ENCODE measurements at regions of chr1 and their contacts with region 1.

Region 1: DNA sequence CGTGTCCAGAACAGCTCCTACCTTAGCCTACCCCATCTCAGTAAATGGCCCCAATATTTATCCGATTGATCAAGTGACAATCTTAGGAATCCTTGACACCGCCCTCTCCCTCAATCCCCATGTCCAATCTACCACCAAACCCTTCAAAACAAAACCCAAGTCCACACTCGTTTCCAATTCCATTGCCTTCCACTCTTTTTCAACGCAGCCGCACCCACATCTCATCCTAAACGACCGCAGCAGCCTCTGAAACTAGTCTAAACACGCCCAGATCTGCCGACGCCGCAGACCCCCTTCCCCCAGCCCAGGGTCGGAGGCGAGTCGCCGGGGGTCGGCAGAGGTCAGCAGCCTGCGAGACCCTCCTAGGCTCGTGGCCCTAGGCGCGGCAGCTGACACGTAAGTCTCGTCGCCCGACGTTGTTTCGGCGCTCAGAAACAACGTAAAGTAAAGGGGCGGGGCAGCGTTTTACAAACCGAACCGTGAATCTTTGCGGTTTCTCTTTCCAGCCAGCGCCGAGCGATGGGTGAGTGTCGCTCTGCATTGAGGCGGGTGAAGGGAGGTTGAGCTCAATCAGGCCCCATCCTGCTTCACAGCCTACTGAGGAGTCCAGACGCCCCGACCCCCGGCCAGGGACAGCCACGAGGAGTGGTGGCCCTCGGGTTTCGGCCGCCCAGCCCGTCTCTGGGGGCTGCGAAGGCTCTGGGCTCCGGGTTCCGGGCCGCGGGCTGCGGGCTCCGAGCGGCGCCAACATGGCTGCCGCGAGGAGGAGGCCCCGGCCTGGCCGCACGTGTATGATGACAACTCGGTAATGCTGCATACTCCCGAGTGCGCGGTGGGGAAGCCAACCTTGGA is at the start of gene RPS8:
- DNase-seq: peak; percentile 92 to 96 (median 94)
- ATAC-seq: peak; percentile 89 to 96 (median 94)
- H3K4me3 ChIP-seq: peak within 1 kb of the TSS; percentile 59 to 95 (median 85)
- H3K27ac ChIP-seq: peak within 1 kb of the TSS; percentile 85 to 99 (median 95)
- H3K4me1 ChIP-seq: peaks cover 2 to 38% (median 23%) of the 10 kb centered on the region in 12 donors
- H3K27me3 ChIP-seq: no peaks in the 10 kb centered on the region
- CTCF ChIP-seq: peak in 1 of 12 donors; percentile 13
- POLR2A ChIP-seq: peak; percentile 47 to 96
- total RNA-seq, gene RPS8: 576 to 1,019 (median 853) TPM

Region 2: GRCh38 chr1:44631647-44632539 is 143.4 kb before region 1 on chr1:
- intact Hi-C with region 1: no loop called
- DNase-seq: peak; percentile 92 to 96 (median 93)
- ATAC-seq: peak; percentile 74 to 88 (median 85)
- H3K4me3 ChIP-seq: peak overlapping the region; percentile 60 to 90 (median 82)
- H3K27ac ChIP-seq: peak overlapping the region; percentile 86 to 98 (median 94)
- H3K4me1 ChIP-seq: peaks cover 0 to 51% (median 24%) of the 10 kb centered on the region in 12 donors
- H3K27me3 ChIP-seq: no peaks in the 10 kb centered on the region
- CTCF ChIP-seq: no peak
- POLR2A ChIP-seq: peak in 1 of 2 donors; percentile 74

Region 3: DNA sequence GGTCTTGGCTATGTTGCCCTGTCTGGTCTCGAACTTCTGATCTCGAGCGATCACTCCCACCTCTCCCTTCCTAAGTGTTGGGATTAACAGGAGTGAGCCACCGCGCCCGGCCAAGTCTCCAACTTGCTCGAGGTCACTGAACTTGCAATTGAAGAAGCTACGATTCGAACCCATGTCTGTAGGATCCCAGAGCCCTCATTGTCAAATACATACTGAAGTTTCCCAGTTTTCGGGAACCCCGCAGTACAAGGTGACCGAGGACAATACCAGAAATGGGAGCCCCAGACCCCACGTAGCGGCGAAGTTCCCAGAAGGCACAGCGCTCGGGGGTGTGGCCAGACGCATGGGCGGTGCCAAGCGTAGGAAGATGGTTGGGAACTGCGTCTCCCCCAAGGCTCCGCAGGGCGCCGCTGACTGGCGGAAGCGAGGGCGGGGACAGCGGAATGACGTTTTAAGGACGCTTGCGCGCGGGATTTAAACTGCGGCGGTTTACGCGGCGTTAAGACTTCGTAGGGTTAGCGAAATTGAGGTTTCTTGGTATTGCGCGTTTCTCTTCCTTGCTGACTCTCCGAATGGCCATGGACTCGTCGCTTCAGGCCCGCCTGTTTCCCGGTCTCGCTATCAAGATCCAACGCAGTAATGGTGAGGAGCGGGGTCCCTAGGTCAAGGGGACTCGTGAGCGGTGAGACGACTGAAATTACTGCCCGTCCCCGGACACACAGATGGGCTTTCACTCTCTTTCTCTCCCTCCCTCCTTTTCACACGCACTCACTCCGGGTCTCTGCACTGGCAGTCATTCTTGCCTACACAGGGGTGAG is 35.7 kb before region 1 on chr1 and contains the start of gene KIF2C:
- intact Hi-C with region 1: loop called in 3 of 10 experiments (anchors 5 to 10 kb)
- DNase-seq: peak; percentile 96 to 98 (median 98)
- ATAC-seq: peak; percentile 100
- H3K4me3 ChIP-seq: peak within 1 kb of the TSS; percentile 19 to 69 (median 60)
- H3K27ac ChIP-seq: peak within 1 kb of the TSS; percentile 43 to 93 (median 86)
- H3K4me1 ChIP-seq: peaks cover 0 to 13% (median 8%) of the 10 kb centered on the region in 12 donors
- H3K27me3 ChIP-seq: no peaks in the 10 kb centered on the region
- CTCF ChIP-seq: peak in 4 of 12 donors; percentile 3 to 41 (median 26)
- POLR2A ChIP-seq: peak in 1 of 2 donors; percentile 69
- total RNA-seq, gene KIF2C: 0.25 to 7.0 (median 1.2) TPM

Region 4: DNA sequence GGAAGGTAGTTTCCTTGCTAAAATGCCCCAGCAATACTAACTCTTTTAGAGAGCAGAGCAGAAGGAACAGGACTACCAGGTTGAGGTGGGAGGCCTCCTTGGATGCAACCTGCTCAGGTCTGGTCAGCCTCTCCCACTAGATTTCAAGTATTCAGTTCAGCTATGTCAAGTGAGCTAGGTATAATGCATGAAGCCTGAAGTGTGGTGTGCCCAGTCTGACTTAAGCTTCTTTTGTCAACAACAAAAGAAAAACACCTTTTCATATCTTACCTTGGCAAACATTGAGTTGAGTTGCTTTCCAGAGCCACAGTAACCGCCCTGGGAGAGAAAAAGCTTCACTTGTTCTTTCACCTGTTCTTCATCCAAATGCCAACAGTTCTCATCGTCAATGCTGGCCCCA is 284.5 kb after region 1 on chr1:
- intact Hi-C with region 1: no loop called
- DNase-seq: no peak
- ATAC-seq: no peak
- H3K4me3 ChIP-seq: no peak overlapping the region
- H3K27ac ChIP-seq: no peak overlapping the region
- H3K4me1 ChIP-seq: no peaks in the 10 kb centered on the region
- H3K27me3 ChIP-seq: no peaks in the 10 kb centered on the region
- CTCF ChIP-seq: no peak
- POLR2A ChIP-seq: no peak